Caco-2 (cell line): ENCODE measurements at regions of chr4 and their contacts with region 1.

Region 1: DNA sequence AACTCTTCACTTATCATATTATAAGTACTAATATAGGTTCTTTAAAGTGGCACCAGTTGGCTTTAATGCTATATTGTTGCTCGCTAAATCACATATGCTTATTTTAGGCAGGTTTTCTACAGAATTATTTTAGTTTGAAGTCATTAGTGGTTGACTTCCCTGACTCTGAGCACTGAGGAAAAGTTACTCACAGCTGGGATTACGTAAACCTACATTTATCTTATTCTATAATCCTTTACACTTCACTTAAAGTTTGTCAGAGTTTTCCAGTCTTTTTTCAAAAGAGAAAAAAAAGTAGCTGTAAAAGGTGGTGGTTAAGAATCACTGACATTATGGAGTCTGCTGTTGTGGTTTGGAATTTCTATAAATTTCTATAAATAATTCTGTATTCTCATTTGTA is 5.8 kb downstream of the UGT2B4 start:
- DNase-seq: no peak
- H3K4me3 ChIP-seq: no peak overlapping the region
- H3K4me3 Mint-ChIP-seq: no peak overlapping the region
- H3K27ac Mint-ChIP-seq: no peak overlapping the region
- H3K4me1 ChIP-seq: 0 out of 2 replicates have a peak, but pooled peaks cover 5% of the 10 kb centered on the region
- H3K4me1 Mint-ChIP-seq: peaks cover 15% of the 10 kb centered on the region
- H3K27me3 ChIP-seq: no peaks in the 10 kb centered on the region
- H3K27me3 Mint-ChIP-seq: no peaks in the 10 kb centered on the region
- CTCF ChIP-seq: no peak

Region 2: GRCh38 chr4:69051576-69051943 is 438.3 kb before region 1 on chr4:
- CTCF ChIA-PET with region 1: no interaction called
- POLR2A ChIA-PET with region 1: no interaction called
- intact Hi-C with region 1: no loop called
- DNase-seq: no peak
- H3K4me3 ChIP-seq: no peak overlapping the region
- H3K4me3 Mint-ChIP-seq: peak overlapping the region; percentile 27
- H3K27ac Mint-ChIP-seq: no peak overlapping the region
- H3K4me1 ChIP-seq: peaks cover 3% of the 10 kb centered on the region; the same call in 1 of the 2 replicates
- H3K4me1 Mint-ChIP-seq: peaks cover 3% of the 10 kb centered on the region
- H3K27me3 ChIP-seq: no peaks in the 10 kb centered on the region
- H3K27me3 Mint-ChIP-seq: no peaks in the 10 kb centered on the region
- CTCF ChIP-seq: no peak

Region 3: GRCh38 chr4:69330345-69331047 is 159.4 kb before region 1 on chr4:
- CTCF ChIA-PET with region 1: no interaction called
- POLR2A ChIA-PET with region 1: no interaction called
- intact Hi-C with region 1: no loop called
- DNase-seq: no peak
- H3K4me3 ChIP-seq: no peak overlapping the region
- H3K4me3 Mint-ChIP-seq: no peak overlapping the region
- H3K27ac Mint-ChIP-seq: no peak overlapping the region
- H3K4me1 ChIP-seq: no peaks in the 10 kb centered on the region
- H3K4me1 Mint-ChIP-seq: no peaks in the 10 kb centered on the region
- H3K27me3 ChIP-seq: no peaks in the 10 kb centered on the region
- H3K27me3 Mint-ChIP-seq: no peaks in the 10 kb centered on the region
- CTCF ChIP-seq: no peak

Region 4: DNA sequence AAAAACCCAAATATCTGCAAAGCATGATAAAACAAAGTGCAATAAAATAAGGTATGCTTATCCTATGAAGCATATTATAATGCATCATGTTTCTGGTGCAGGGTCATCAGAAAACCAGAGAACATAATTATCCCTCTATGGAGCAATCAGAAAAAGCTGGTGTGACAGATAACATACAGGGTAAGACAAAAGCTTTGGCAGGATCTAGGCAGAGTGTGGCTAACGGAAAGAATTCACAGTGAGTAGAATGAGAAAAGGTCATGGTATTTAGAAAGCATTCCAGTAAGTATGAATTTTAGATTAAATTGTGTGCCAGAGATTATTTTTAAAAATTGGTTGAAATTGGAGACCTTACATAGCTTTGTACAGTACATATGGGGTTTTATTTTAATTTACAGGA is 34.9 kb after region 1 on chr4:
- CTCF ChIA-PET with region 1: no interaction called
- POLR2A ChIA-PET with region 1: no interaction called
- intact Hi-C with region 1: loop called (anchors 5 kb)
- DNase-seq: no peak
- H3K4me3 ChIP-seq: no peak overlapping the region
- H3K4me3 Mint-ChIP-seq: no peak overlapping the region
- H3K27ac Mint-ChIP-seq: no peak overlapping the region
- H3K4me1 ChIP-seq: no peaks in the 10 kb centered on the region
- H3K4me1 Mint-ChIP-seq: no peaks in the 10 kb centered on the region
- H3K27me3 ChIP-seq: no peaks in the 10 kb centered on the region
- H3K27me3 Mint-ChIP-seq: no peaks in the 10 kb centered on the region
- CTCF ChIP-seq: no peak